AG04449 (cell line): ENCODE measurements at regions of chr2 and their contacts with region 1.

Region 1: GRCh38 chr2:158753641-158754611 is 41.2 kb upstream of the DAPL1 start:
- DNase-seq: peak; percentile 12
- H3K4me3 ChIP-seq: no peak overlapping the region
- CTCF ChIP-seq: peak; percentile 83

Region 2: DNA sequence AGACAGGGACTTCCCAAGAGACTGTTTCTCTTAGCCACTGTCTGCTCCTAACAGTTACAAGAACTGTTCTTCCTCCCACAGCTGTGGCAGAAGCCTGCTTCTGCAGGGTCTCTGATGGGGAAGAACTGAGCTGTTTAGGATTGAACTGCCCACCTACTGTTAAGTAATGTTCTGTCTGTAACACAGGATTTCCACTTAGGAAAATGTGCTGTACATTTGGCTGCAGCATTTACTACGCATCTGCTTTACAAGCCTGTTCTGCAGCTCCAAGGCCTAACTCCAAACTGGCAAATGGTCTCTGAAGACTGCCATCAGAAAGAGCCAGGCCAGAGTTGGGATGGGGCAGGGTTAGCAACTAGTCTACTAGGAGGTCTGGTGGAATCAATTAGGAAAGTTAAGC is 740.0 kb before region 1 on chr2:
- CTCF ChIA-PET with region 1: interaction called, 12 read pairs
- POLR2A ChIA-PET with region 1: no interaction called
- DNase-seq: no peak
- H3K4me3 ChIP-seq: no peak overlapping the region
- CTCF ChIP-seq: no peak

Region 3: DNA sequence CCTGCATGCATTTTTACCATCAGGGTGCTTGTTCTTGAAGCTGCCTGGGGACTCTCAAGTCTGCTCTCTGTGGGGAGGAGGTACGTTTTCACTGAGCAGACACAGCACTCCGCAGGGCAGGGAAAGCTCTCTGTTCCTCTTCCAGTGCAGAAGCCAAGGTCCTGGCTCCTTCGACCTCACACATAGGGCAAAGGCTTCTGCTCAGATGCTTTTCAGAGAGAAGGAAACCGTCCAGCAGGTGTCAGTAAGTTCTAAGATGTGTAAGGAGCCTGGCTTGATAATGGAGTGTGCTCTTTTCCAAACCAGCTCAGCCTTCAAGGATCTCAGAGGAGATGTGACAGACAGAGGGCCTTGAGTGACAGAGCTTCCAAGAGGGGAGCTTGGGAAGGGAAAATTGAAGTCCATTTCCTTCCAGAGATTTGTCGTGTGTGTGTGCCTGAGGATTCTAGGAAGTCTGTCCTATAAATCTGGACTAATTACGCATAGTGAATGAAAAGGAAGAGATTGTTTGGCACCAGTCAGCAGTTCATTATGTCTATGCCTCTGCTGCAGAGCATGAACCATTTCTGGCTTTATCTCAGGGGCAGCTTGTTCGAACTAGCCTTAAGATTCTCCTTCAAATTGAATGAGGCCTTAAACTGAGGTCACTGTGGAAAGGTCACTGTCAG is 719.6 kb before region 1 on chr2:
- CTCF ChIA-PET with region 1: interaction called, 322 read pairs
- POLR2A ChIA-PET with region 1: no interaction called
- DNase-seq: no peak
- H3K4me3 ChIP-seq: no peak overlapping the region
- CTCF ChIP-seq: peak; percentile 32

Region 4: DNA sequence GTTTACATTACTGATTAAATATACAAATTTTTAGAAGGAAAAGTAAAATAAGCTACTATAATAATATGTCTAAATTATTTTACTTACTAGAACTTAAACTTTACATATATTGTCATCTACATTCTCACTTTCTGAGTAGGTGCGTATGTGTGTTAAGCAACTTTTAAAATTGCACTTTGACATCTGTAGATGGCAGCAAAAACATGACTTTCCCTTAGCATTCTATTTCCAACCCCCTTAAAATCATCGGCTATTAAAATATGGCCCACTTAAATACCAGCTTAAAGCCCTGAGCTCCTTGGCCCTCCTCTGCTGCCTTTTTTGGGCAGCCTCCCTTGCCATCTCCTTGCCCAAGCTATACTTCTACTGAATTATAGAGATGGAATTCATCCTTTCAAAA is 574.3 kb before region 1 on chr2:
- CTCF ChIA-PET with region 1: interaction called, 76 read pairs
- POLR2A ChIA-PET with region 1: no interaction called
- DNase-seq: no peak
- H3K4me3 ChIP-seq: no peak overlapping the region
- CTCF ChIP-seq: peak; percentile 1

Region 5: DNA sequence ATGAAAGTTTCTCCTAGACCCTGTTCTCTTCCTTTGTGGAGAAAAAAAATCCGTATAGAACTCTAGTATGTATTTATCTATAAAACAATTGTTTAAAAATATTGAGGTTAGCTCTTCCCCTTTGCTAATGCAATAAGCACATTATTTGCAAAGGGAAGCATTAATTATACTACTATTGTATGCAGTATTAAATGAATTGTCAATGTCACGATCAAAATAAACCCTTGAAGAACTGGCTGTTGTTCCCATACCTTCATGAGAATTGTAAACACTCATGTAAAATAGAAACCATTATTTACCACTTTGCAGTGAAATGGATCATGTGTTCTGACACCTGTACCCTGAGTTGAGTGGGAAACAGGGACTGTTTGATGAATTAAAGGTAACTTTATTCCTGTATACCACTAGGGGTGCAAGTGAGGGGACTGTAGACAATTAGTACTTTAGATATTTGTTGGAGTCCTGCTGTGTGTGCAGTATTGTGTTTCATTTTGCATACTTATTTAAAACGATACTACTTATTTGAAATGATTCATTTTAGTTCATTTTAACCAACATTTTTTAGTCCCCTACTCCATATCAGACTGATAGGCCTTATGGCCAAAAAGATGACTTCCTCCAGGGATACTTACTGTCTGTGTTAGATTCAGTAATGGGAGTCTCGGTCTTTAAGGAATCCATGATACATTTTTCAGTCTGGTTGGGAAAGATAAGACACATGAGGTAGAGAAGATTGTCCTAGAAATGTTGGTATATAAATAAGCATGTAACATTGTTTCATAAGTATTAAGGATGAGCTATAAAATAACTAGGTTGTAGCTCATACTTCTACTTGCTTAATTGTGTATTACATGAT is 289.3 kb before region 1 on chr2:
- CTCF ChIA-PET with region 1: interaction called, 11 read pairs
- POLR2A ChIA-PET with region 1: no interaction called
- DNase-seq: no peak
- H3K4me3 ChIP-seq: no peak overlapping the region
- CTCF ChIP-seq: peak; percentile 19

Region 6: DNA sequence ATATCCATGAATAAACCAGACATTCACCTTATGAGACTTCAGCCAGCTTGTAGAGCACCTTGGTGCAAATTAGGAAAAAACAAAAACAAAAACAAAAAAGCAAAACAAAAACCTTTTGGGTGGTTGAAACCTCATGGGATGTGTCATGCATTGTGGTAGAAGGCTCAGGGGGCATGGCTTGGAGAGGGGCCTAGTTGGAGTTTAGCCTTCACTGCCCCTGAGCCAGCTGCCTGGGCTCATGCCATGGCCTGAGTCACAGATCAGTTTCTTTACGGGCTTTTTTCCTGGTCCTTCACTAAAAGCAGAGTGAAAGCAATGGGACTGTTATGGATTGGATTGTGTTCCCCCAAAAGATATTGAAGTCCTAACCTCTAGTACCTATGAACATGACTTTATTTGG is 19.2 kb after region 1 on chr2:
- CTCF ChIA-PET with region 1: interaction called, 12 read pairs
- POLR2A ChIA-PET with region 1: no interaction called
- DNase-seq: no peak
- H3K4me3 ChIP-seq: no peak overlapping the region
- CTCF ChIP-seq: no peak